Cardiac septum (tissue), 1 donor: ENCODE measurements at regions of chrX and their contacts with region 1.

Region 1: GRCh38 chrX:132071260-132071659 is 48.2 kb downstream of the STK26 start:
- DNase-seq: no peak

Region 2: GRCh38 chrX:132017431-132018185 is 53.7 kb before region 1 on chrX:
- intact Hi-C with region 1: loop called (anchors 10 kb)
- DNase-seq: no peak